Gastrocnemius medialis (tissue), 4 donors: ENCODE measurements at regions of chr10 and their contacts with region 1.

Region 1: GRCh38 chr10:6514844-6515780 is 65.0 kb downstream of the PRKCQ start:
- DNase-seq: peak; percentile 36 to 63
- ATAC-seq: peak; percentile 86
- H3K4me3 ChIP-seq: peak overlapping the region; percentile 34 to 50 (median 42)
- H3K27ac ChIP-seq: peak overlapping the region; percentile 88 to 92 (median 90)
- H3K4me1 ChIP-seq: peaks cover 29 to 43% of the 10 kb centered on the region in 2 donors
- H3K27me3 ChIP-seq: no peaks in the 10 kb centered on the region
- CTCF ChIP-seq: no peak
- POLR2A ChIP-seq: peak; percentile 26 to 72

Region 2: DNA sequence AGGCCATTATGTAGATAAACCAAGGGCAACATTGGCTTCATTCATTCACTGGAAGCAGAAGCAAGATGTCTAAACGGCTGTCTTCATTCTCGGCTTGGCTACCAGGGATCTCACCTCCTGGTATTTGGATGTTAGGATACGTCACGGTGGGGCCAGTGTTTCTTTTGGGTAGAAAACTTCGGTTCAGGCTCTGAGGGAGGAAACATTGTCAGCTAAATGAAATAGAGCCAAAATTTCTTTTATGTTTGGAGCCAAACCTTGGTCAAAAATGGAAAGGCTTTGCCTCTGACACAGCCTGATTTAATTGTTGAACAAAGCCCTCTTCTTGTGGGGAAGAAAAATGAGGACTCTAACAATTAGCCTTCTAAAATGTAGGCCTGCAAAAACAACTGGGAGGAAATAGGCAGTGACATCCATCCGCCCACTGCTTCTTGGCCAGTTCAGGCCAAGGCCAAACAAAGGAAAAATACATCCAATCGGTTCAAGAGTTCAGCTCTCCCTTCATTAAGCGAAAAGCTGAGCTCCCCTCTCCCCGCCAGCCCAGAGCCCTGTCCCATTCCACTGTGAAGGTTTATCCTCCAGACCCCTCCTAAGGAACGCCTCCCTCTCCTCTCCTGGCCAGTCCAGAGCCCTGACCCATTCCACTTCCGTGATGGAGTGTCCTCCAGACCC is 267.9 kb before region 1 on chr10:
- in situ Hi-C with region 1: no loop called
- intact Hi-C with region 1: no loop called
- DNase-seq: no peak
- ATAC-seq: no peak
- H3K4me3 ChIP-seq: no peak overlapping the region
- H3K27ac ChIP-seq: no peak overlapping the region
- H3K4me1 ChIP-seq: no peaks in the 10 kb centered on the region
- H3K27me3 ChIP-seq: no peaks in the 10 kb centered on the region
- CTCF ChIP-seq: no peak
- POLR2A ChIP-seq: no peak

Region 3: GRCh38 chr10:6300106-6300783 is 214.9 kb before region 1 on chr10:
- in situ Hi-C with region 1: no loop called
- intact Hi-C with region 1: no loop called
- DNase-seq: no peak
- ATAC-seq: no peak
- H3K4me3 ChIP-seq: no peak overlapping the region
- H3K27ac ChIP-seq: no peak overlapping the region
- H3K4me1 ChIP-seq: no peaks in the 10 kb centered on the region
- H3K27me3 ChIP-seq: no peaks in the 10 kb centered on the region
- CTCF ChIP-seq: no peak
- POLR2A ChIP-seq: no peak

Region 4: GRCh38 chr10:6558759-6559461 is 43.8 kb after region 1 on chr10:
- in situ Hi-C with region 1: no loop called
- intact Hi-C with region 1: loop called (anchors 2 kb)
- DNase-seq: peak; percentile 46 to 54
- ATAC-seq: peak; percentile 77 to 96
- H3K4me3 ChIP-seq: peak overlapping the region in 3 of 4 donors; percentile 8 to 36 (median 25)
- H3K27ac ChIP-seq: peak overlapping the region; percentile 51 to 79 (median 64)
- H3K4me1 ChIP-seq: peaks cover 16 to 36% of the 10 kb centered on the region in 2 donors
- H3K27me3 ChIP-seq: no peaks in the 10 kb centered on the region
- CTCF ChIP-seq: no peak
- POLR2A ChIP-seq: no peak

Region 5: DNA sequence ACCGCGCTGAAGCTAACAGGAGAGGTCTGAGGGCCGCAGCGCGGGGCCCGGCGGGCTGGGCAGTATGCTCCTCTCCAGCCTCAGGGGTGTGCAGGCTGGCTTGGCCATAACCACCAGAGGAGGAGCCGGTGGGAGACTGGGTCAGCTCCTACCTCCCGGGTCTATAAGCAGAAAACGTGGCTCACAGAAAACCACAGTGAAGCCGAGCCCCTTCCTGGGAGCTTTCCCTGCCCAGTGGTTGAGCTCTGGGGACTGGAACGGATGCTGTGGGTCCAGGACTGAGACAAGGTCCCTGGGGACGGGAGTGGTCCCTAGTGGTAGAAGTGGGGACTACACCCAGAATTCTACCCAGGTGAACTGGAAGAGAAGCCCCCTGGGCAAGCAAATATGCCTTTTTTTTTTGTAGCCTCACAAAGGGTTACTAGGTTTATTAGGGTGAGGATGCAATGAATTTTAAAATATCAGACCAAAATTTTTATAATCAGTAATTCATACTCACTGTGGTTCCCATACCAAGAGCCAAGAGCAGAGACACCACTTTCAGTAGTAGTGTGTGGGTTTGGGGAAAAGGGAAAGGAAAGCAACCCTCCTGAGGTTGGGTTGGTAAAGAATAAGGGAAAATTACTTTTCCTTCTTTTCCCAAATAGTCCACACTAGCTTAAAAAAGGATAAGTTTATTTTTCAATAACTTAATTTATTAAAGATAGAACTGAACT is 132.9 kb after region 1 on chr10:
- in situ Hi-C with region 1: no loop called
- intact Hi-C with region 1: loop called (anchors 10 kb)
- DNase-seq: peak; percentile 7 to 43
- ATAC-seq: peak; percentile 50 to 74
- H3K4me3 ChIP-seq: no peak overlapping the region
- H3K27ac ChIP-seq: no peak overlapping the region
- H3K4me1 ChIP-seq: no peaks in the 10 kb centered on the region
- H3K27me3 ChIP-seq: no peaks in the 10 kb centered on the region
- CTCF ChIP-seq: peak; percentile 48 to 75 (median 64)
- POLR2A ChIP-seq: no peak

Region 6: DNA sequence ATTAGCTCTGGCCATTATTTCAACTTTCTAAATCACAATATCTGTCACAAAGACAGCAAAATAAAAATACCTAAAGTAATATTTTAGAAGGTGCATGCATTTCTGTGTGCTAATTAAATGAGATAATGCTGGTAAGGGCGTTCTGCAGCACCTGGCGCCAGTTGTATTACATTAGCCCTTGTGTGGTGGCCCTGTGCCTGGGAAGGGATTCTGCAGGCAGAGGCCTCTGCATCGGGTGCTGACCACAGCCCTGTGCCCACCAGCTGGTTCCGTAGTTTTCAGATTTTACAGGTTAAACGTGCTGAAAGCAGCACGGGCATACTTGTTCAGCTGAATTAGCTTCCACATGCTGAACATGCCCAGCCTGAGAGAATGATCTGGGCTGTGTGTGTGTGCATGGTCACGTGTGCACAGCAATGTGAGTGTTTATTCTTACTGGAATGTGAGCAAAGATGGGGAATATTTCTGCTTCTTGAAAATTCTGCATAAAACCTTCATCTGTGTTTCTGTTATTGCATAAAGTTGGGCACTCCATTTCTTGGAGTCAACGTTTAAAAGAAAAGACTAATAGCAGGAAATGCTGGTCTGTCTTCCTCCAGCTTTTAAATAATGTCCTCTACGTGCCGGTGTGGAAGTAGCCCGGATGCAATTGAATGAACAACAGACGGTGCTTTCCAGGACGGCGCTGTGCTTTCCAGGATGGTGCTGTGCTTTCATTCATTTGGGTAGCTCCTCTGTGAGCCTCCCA is 222.8 kb after region 1 on chr10:
- in situ Hi-C with region 1: no loop called
- intact Hi-C with region 1: loop called (anchors 10 kb)
- DNase-seq: peak in 1 of 2 donors; percentile 32
- ATAC-seq: peak; percentile 38 to 49
- H3K4me3 ChIP-seq: peak overlapping the region; percentile 41 to 50 (median 44)
- H3K27ac ChIP-seq: peak overlapping the region; percentile 81 to 93 (median 89)
- H3K4me1 ChIP-seq: peaks cover 74 to 75% of the 10 kb centered on the region in 2 donors
- H3K27me3 ChIP-seq: no peaks in the 10 kb centered on the region
- CTCF ChIP-seq: no peak
- POLR2A ChIP-seq: no peak